ENCODE measurements at regions of chr7 and their contacts with region 1.

Region 1: DNA sequence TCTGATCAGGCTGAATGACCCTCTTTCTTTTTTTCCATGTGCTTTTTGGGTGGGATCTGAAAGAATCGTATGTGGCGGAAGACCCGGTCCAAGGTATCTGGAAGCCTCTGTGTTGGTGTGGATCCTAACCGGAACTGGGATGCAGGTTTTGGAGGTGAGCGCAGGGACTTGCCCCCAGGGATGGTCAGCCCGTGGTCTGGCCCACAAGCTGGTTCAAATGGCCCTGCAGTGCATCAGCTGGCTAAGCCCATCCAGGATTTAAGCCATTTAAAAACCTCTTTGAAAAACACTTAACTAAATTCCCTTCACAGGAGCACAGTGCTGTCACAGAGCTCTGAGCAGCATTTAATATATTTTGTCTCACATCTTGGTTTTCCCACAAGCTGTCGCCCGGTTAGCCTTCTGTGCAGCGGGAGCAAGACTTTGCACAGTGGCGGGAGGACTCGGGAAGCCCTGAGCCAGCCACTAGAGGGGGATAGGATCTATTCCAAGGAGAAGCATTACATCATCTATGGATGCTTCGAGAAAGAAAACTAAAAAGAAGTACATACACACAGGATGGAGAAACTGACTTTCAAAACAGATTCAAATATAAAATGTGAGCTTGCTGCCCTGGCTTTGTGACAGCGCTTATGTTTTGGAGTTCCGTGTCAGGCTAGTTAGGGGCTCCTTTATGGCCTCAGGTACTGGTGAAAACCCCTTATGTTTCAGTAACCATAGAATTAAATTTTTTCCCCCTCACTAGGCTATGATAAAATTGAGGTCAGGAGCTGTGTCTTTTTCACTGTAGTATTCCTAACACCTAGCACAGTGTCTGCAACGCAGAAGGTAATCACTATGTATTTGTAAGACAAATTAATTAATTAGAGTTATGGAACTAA is 11.3 kb downstream of the CPA2 start:
- DNase-seq: peak in 1 of 2 donors; percentile 78
- H3K4me3 ChIP-seq: no peak overlapping the region
- H3K27ac ChIP-seq: peak overlapping the region in 1 of 2 donors; percentile 11
- H3K4me1 ChIP-seq: peaks cover 4 to 5% of the 10 kb centered on the region in 2 donors
- H3K27me3 ChIP-seq: no peaks in the 10 kb centered on the region
- CTCF ChIP-seq: peak; percentile 45 to 73 (median 66)

Region 2: DNA sequence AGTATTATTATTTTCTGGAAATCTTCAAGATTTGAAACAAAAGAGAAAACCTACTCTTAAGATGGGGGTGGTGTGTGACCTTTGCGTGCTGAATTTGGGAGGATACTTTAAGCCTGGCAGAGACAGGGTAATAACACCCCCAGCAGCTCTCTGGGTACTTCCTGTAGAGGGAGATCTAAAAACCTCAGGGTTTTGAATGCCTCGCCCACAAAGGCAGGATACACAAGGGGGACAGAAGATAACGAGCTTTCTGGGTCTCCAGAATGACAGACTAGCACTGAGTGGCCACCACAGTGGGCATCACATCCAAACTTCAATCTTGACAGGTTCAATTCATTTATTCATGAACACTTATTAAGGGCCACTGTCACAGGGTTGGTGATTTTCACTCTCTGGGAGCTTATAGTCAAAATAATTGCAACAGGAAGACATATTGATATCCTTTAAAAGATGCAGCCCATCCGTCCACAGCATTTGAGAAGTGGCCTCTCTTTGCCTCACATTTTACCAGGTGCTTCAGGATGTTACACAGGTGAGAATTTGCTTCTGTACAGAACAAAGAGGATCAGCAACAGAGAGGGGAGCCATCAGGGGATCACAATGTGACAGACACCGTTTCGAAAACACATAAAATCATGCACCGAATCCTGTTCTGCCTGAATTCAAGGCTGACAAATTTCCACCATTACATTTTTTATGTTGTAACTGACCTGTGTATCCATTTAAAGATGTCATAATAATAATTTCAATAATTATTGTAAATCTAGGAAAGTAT is 116.6 kb after region 1 on chr7:
- intact Hi-C with region 1: loop called (anchors 5 kb)
- DNase-seq: no peak
- H3K4me3 ChIP-seq: no peak overlapping the region
- H3K27ac ChIP-seq: peak overlapping the region; percentile 32 to 61
- H3K4me1 ChIP-seq: peaks cover 0 to 9% of the 10 kb centered on the region in 2 donors
- H3K27me3 ChIP-seq: no peaks in the 10 kb centered on the region
- CTCF ChIP-seq: no peak

Region 3: GRCh38 chr7:130486114-130486958 is 208.3 kb after region 1 on chr7:
- intact Hi-C with region 1: loop called (anchors 5 kb)
- DNase-seq: no peak
- H3K4me3 ChIP-seq: peak overlapping the region; percentile 58 to 71
- H3K27ac ChIP-seq: no peak overlapping the region
- H3K4me1 ChIP-seq: peaks cover 0 to 14% of the 10 kb centered on the region in 2 donors
- H3K27me3 ChIP-seq: no peaks in the 10 kb centered on the region
- CTCF ChIP-seq: peak; percentile 39 to 72 (median 53)

Region 4: GRCh38 chr7:130668257-130669084 is 390.5 kb after region 1 on chr7 and contains the start of gene COPG2:
- intact Hi-C with region 1: loop called (anchors 10 kb)
- DNase-seq: peak; percentile 22 to 88
- H3K4me3 ChIP-seq: peak within 1 kb of the TSS; percentile 83 to 89
- H3K27ac ChIP-seq: peak within 1 kb of the TSS; percentile 68 to 70
- H3K4me1 ChIP-seq: peaks cover 0 to 3% of the 10 kb centered on the region in 2 donors
- H3K27me3 ChIP-seq: no peaks in the 10 kb centered on the region
- CTCF ChIP-seq: no peak
- total RNA-seq, gene COPG2: 5.4 TPM